ENCODE measurements at regions of chr14 and their contacts with region 1.

Region 1: GRCh38 chr14:74109369-74109768 is 24.6 kb downstream of the LIN52 start:
- DNase-seq: no peak
- H3K4me3 ChIP-seq: no peak overlapping the region
- H3K27ac ChIP-seq: no peak overlapping the region
- H3K4me1 ChIP-seq: no peaks in the 10 kb centered on the region
- H3K27me3 ChIP-seq: no peaks in the 10 kb centered on the region
- CTCF ChIP-seq: no peak

Region 2: DNA sequence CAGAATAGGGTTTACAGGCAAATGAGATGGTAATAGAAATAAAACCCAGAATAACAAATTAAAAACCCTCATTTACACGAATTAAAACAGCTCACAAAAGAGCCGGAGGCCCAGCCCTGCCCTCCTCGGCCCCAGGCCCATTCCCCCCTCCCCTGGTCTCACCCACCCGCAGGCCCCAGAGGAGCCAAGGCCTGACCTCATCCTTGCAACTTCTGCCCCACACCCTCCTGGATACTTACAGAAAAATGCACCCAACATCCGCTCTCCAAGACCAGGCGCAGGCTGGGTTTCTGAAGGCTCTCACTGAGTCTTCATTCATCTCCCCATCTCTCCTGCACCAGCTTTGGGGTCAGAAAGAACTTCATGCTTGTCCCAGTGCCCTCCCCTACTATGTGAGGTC is 113.6 kb after region 1 on chr14:
- CTCF ChIA-PET with region 1: no interaction called
- dilution Hi-C with region 1: loop called (anchors 5 kb)
- in situ Hi-C with region 1: no loop called
- intact Hi-C with region 1: no loop called
- DNase-seq: no peak
- H3K4me3 ChIP-seq: no peak overlapping the region
- H3K27ac ChIP-seq: no peak overlapping the region
- H3K4me1 ChIP-seq: no peaks in the 10 kb centered on the region
- H3K27me3 ChIP-seq: peaks cover 5% of the 10 kb centered on the region
- CTCF ChIP-seq: no peak

Region 3: DNA sequence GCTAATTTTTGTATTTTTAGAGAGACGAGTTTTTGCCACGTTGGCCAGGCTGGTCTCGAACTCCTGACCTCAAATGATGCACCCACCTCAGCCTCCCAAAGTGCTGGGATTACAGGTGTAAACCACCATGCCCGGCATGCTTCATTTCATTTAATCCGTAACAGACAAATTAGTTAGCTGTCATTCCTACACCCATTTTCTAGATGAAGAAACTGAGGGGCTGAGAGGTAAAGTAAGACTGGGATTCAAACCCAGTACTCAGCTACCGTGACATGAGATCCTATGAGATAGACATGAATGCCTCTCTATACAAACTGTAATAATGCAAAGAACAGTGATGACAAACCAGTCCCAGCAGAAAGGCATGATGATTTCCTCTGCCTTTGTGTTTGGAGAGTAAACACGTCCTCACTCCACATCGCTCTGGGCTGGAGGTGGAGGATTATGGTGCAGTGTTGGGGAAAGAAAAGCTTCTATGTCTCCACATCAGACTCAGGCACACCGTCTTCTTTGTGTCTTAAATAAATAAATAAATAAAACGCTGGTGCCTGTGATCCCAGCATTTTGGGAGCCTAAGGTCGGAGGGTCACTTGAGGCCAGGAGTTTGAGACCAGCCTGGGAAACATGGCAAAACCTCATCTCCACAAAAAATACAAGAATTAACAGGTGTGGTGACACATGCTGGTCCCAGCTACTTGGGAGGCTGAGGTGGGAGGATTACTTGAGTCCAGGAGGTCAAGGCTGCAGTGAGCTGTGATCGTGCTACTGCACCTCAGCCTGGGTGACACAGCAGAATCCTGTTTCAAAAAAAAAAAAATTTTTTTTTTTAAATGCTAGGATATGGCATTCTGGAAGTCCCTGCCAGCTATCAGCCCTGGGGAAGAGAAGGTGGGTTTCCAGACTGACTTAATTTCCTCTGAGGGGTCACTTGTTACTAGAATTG is 140.3 kb after region 1 on chr14:
- CTCF ChIA-PET with region 1: no interaction called
- dilution Hi-C with region 1: no loop called
- in situ Hi-C with region 1: loop called (anchors 5 to 10 kb)
- intact Hi-C with region 1: loop called (anchors 1 kb)
- DNase-seq: no peak
- H3K4me3 ChIP-seq: no peak overlapping the region
- H3K27ac ChIP-seq: no peak overlapping the region
- H3K4me1 ChIP-seq: no peaks in the 10 kb centered on the region
- H3K27me3 ChIP-seq: peaks cover 6% of the 10 kb centered on the region
- CTCF ChIP-seq: no peak

Region 4: DNA sequence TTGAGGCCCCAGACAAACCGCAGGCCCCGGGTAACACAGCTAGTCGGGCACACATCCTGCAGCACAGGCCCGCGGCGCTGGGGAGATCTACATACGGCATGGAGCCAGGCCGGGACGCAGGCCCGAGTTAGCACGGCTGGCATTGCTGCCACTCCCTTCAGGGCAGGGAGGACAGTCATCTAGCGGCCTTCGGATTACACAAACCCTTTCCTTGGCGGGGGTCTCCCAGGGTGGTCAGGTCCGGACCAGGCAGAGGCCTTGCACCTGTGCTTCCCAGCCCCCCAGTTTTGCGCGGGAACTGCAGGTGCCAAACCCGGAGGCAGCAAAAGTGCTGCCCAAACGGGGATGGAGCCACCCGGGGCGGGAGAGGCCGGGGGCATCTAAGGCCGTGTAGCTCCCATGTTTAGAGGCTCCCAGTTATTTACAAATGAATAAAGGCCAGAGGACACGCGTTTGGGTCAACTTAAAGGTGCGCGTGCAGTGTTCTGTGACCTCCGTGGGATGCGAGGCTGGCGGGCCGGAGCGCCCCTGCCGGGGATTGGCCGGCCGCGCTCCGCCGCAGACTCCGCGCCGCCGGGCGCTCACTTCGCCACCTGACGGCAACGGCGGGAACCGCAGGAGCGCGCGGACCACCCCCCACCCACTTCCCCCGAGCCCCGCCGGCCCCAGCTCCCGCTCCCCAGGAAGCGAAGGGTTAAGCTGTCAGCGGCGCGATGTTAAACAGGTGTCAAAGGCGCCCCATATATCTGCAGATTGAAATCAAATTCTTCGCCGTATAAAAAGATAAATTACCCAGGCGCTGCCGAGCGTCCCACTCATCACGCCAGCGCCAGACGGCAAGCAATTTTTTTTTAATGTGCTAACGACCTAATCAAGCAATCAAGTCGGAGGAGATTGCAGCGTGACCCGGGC is 148.0 kb after region 1 on chr14:
- CTCF ChIA-PET with region 1: no interaction called
- dilution Hi-C with region 1: no loop called
- in situ Hi-C with region 1: loop called (anchors 5 to 10 kb)
- intact Hi-C with region 1: no loop called
- DNase-seq: no peak
- H3K4me3 ChIP-seq: peak overlapping the region; percentile 50 to 62 (median 53)
- H3K27ac ChIP-seq: no peak overlapping the region
- H3K4me1 ChIP-seq: peaks cover 22% of the 10 kb centered on the region
- H3K27me3 ChIP-seq: no peaks in the 10 kb centered on the region
- CTCF ChIP-seq: peak; percentile 60 to 63

Region 5: DNA sequence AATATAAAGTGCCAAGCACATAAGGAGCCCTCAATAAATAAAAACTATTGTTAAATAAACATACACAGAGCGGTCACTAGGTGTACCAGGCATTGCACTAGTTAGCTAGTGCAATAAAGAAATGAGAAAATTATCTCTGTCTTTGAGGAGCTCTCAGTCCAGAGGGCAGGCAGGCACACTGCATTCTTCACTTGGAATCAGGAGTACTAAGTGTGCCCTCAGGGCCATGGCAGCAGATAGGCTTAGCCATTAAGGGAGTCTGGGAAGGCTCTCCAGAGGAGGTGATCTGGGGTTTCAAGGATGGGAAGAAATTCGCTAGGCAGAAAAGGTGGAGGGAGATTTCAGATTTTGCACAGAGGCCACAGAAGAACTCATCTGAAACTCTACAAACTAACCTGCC is 184.2 kb after region 1 on chr14:
- CTCF ChIA-PET with region 1: no interaction called
- dilution Hi-C with region 1: loop called (anchors 5 kb)
- in situ Hi-C with region 1: no loop called
- intact Hi-C with region 1: loop called (anchors 1 kb)
- DNase-seq: no peak
- H3K4me3 ChIP-seq: no peak overlapping the region
- H3K27ac ChIP-seq: no peak overlapping the region
- H3K4me1 ChIP-seq: no peaks in the 10 kb centered on the region
- H3K27me3 ChIP-seq: no peaks in the 10 kb centered on the region
- CTCF ChIP-seq: no peak

Region 6: GRCh38 chr14:74302634-74303577 is 193.5 kb after region 1 on chr14 and contains the start of gene ABCD4:
- CTCF ChIA-PET with region 1: no interaction called
- dilution Hi-C with region 1: loop called (anchors 5 kb)
- in situ Hi-C with region 1: no loop called
- intact Hi-C with region 1: no loop called
- DNase-seq: peak; percentile 87
- H3K4me3 ChIP-seq: peak within 1 kb of the TSS; percentile 81 to 99 (median 85)
- H3K27ac ChIP-seq: peak within 1 kb of the TSS; percentile 62
- H3K4me1 ChIP-seq: peaks cover 6% of the 10 kb centered on the region
- H3K27me3 ChIP-seq: no peaks in the 10 kb centered on the region
- CTCF ChIP-seq: peak; percentile 42 to 61
- total RNA-seq, gene ABCD4: 30.1 to 31.0 TPM

Region 7: GRCh38 chr14:74852927-74853514 is 743.7 kb after region 1 on chr14:
- CTCF ChIA-PET with region 1: no interaction called
- dilution Hi-C with region 1: no loop called
- in situ Hi-C with region 1: no loop called
- intact Hi-C with region 1: no loop called
- DNase-seq: no peak
- H3K4me3 ChIP-seq: no peak overlapping the region
- H3K27ac ChIP-seq: no peak overlapping the region
- H3K4me1 ChIP-seq: peaks cover 28% of the 10 kb centered on the region
- H3K27me3 ChIP-seq: no peaks in the 10 kb centered on the region
- CTCF ChIP-seq: no peak

Measured in mammary epithelial cell (primary cell).